A549 (cell line): ENCODE measurements at regions of chr7 and their contacts with region 1.

Region 1: DNA sequence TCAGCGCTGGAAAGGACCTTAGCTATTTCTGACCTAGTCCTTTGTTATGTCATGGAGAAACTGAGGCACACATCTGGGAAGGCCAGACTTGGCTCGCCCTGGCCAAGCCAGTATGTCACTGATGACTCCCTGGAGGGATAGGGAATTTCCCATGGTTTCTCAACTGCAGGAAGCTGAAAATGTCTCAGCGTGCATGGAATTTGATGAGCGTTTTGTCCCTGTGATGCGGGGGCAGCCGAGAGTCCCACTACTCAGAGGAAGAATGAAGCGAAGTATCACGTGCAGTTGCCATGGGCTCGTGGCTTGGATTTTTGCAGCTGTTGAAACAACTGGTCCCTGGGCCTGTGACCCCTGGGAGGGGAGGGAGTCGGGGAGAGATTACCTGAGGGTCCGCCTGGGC is 44.8 kb downstream of the CLIP2 start:
- DNase-seq: peak in 1 of 2 experiments; percentile 29
- ATAC-seq: peak in 1 of 2 experiments; percentile 42; a peak in 3 of 6 replicates
- H3K4me3 ChIP-seq: no peak overlapping the region
- H3K27ac ChIP-seq: peak overlapping the region in 1 of 2 experiments; percentile 54; a peak in 2 of 6 replicates
- H3K4me1 ChIP-seq: peaks cover 7% of the 10 kb centered on the region; the same call in 1 of the 3 replicates
- CTCF ChIP-seq: no peak
- EP300 ChIP-seq: no peak; a peak in 1 of 5 replicates
- POLR2A ChIP-seq: no peak
- RAD21 ChIP-seq: no peak

Region 2: GRCh38 chr7:74306730-74307469 is 27.1 kb before region 1 on chr7:
- CTCF ChIA-PET with region 1: no interaction called
- POLR2A ChIA-PET with region 1: no interaction called
- DNase-seq: no peak
- ATAC-seq: peak; percentile 60 to 71
- H3K4me3 ChIP-seq: no peak overlapping the region
- H3K27ac ChIP-seq: peak overlapping the region; percentile 34 to 77; a peak in 4 of 6 replicates
- H3K4me1 ChIP-seq: peaks cover 27% of the 10 kb centered on the region
- CTCF ChIP-seq: no peak
- EP300 ChIP-seq: no peak
- POLR2A ChIP-seq: no peak
- RAD21 ChIP-seq: no peak

Region 3: DNA sequence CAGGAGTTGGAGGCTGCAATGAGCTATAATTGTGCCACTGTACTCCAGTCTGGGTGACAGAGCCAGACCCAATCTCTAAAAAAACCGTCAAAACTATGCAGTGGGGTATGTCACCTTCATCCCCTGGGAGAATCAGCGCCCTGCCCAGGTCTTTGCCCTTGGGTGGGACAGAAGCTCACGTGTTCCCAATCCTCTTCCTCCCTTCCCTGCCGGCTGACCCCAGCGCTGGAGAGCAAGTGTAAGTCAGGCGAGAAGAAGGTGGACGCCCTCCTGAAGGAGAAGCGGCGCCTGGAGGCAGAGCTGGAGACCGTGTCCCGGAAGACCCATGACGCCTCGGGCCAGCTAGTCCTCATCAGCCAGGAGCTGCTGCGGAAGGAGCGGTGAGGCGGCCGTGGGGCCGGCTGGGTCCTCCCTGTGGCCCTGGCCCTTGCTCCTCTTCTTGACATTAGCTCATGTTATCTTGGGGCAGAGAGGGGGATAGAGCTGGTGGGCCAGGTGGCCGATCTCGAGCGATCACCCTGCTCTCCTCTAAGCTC is 54.9 kb after region 1 on chr7:
- CTCF ChIA-PET with region 1: interaction called, 3 read pairs
- POLR2A ChIA-PET with region 1: interaction called, 10 read pairs
- DNase-seq: no peak
- ATAC-seq: no peak
- H3K4me3 ChIP-seq: no peak overlapping the region
- H3K27ac ChIP-seq: no peak overlapping the region
- H3K4me1 ChIP-seq: 0 out of 3 replicates have a peak, but pooled peaks cover 6% of the 10 kb centered on the region
- CTCF ChIP-seq: no peak
- EP300 ChIP-seq: no peak
- POLR2A ChIP-seq: no peak
- RAD21 ChIP-seq: no peak